BJ (cell line): ENCODE measurements at regions of chr1 and their contacts with region 1.

Region 1: DNA sequence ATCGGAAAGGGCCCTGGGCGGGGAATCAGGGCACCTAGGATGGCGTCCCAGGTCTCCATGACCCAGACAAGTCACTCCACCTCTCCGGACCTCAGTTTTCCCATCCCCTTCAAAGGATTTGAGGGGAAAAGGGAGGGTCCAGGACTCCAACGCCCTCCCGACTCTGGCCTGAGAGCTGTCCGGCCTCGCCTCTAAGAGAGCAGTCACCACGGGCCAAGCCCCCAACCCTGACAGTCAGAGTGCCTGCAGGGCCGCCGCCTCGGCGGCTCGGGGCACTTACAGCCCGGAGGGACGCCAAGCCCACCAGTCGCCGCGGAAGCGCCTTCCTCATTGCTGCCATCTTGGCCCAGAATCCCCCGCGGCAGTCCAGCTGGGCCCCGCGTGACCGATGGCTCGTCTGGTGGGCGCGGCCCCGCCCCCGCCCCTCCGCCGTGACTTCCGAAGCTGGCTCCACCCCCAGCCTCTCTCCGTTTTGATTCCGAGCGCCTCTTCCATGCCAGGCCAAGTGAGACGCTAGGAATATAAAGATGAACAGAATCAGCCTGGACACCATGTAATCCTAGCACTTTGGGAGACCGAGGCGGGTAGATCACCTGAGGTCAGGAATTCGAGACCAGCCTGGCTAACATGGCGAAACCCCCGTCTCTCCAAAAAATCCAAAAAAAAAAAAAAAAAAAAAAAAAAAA is at the start of gene HMGCL:
- DNase-seq: peak; percentile 50
- H3K4me3 ChIP-seq: peak within 1 kb of the TSS; percentile 100
- H3K27me3 ChIP-seq: no peaks in the 10 kb centered on the region
- CTCF ChIP-seq: no peak
- polyA plus RNA-seq, gene HMGCL: 38.4 and 41.7 TPM in 2 replicates

Region 2: DNA sequence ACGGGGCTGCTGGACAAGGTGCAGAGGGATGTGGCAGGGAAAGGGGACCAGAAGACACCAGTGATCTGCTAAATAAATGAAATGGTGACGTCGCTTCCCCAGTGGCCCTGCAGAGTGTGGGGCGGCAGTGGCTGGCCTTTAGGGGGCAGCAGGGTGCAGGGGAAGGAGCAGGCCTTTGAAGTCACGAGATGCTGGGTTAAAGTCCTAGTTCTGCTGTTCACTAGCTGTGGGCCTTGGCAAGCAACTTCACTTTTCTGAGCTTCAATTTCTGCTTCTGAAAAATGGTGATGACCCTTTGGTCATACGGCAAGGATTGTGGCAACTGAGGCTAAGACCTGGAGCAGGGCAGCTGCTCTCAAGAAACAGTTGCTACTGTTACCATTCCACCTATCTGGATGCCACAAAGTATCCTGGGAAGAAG is 15.5 kb before region 1 on chr1:
- CTCF ChIA-PET with region 1: interaction called, 77 read pairs
- POLR2A ChIA-PET with region 1: no interaction called
- DNase-seq: no peak
- H3K4me3 ChIP-seq: no peak overlapping the region
- H3K27me3 ChIP-seq: no peaks in the 10 kb centered on the region
- CTCF ChIP-seq: peak; percentile 88